Activated CD8-positive, alpha-beta T cell treated with anti-CD3 and anti-CD28 coated beads, Interleukin-2, amount 10 ng/mL, durations not matched to agents 7 days and 5 days (primary cell): ENCODE measurements at regions of chr22 and their contacts with region 1.

Region 1: DNA sequence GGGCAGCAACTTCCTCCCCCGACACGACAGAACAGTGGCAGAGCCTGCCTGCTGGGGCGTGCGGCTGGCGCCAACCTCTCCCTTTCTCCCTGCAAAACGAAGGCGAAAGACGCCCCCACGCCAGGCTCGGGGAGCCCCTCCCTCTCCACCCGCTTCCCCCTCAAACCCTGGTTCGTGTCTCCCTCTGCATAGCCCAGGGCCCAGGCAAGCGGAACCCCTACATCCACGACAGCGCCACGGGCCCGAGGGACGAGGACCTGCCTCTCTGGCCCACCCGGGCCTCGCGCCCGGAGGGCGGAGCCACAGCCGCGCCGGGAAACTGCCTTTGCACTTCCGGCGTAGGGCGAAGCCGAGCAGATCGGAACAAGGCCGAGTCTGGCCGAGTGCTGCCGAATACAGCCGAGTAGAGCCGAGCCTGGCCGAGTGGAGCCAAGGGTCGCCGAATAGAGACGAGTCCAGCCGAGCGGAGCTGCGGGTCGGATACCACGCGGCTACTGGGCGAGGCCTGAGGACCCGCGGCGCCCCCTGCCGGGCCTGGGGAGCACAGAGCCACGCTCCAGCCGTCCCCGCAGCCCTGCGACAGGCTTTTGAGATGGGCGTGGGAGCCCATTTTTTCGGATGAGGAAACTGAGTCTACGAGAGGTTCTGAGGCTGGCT is 11.2 kb upstream of the C1QTNF6 start:
- DNase-seq: peak; percentile 100
- ATAC-seq: peak; percentile 98
- H3K4me3 Mint-ChIP-seq: peak overlapping the region; percentile 87
- H3K27ac Mint-ChIP-seq: peak overlapping the region; percentile 96
- H3K4me1 Mint-ChIP-seq: peaks cover 71% of the 10 kb centered on the region
- H3K27me3 Mint-ChIP-seq: no peaks in the 10 kb centered on the region

Region 2: DNA sequence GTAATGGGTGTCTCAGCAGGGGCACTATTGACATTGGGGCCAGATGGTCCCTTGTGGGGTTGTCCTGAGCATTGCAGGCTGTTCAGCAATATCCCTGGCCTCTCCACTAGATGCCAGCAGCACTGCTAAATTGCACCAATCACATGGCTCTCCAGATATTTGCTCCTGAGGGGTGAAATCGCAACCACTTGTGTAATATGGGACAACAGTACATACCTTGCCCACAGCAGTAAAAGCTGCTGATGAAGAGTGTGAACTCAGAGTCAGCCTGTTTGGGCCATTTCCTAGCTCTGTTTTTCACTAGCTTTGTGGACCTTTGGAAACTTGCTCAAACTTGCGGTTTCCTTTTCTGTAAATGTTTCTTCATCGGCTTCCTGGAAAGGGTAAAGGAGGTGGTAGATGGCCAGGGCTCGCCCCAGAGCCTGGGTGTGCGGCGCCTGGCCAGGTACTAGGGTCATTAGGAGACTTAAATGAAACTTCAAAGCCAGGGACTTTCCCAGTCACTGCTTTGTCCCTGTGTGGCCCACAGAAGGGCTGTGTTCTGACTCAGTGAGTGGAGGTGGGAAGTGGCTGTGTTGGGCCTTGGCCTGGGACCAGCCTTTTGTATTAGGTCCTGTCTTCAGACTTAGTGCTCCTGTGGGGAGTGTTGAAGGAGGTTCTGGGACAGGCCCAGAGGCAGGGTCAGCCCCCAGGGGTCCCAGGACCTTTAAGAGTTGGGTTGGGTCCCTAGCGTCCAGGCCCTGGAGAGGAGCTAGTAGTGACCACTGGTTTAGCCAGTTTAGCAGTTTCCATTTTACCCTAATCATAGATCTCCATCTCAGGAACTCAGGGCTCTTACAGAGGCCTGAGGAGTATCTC is 325.3 kb before region 1 on chr22:
- CTCF ChIA-PET with region 1: no interaction called
- POLR2A ChIA-PET with region 1: no interaction called
- DNase-seq: peak; percentile 33
- ATAC-seq: peak; percentile 75
- H3K4me3 Mint-ChIP-seq: no peak overlapping the region
- H3K27ac Mint-ChIP-seq: peak overlapping the region; percentile 82
- H3K4me1 Mint-ChIP-seq: peaks cover 21% of the 10 kb centered on the region
- H3K27me3 Mint-ChIP-seq: no peaks in the 10 kb centered on the region

Region 3: DNA sequence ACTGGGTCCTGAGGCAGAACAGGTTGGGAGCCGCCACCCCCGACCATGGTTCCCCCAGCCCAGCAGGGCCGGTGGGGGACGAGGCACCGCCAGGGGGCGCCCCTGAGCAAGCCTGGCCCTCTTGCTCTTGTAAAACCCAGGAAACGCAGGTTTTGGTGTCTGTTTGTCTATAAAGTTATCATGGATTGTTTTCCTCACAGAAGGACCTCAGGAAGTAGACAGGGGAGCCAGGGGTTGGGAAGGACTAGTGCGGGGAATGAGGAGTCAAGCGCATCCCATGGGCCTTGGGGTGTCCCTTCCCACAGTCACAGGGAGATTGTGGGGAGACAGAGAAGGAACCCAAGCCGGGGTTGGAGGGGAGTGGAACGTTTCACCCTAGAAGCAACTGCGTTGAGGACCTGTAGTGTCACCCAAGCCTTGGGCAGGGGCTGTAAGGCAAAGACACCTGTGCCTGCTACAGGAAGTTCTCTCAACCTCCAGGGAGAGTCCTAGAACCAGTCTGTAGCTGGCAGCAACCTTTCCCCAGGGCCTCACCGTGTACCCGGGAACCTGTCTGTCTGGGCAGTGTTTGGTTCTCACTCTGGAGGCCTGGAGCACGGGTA is 121.2 kb before region 1 on chr22:
- CTCF ChIA-PET with region 1: interaction called, 30 read pairs
- POLR2A ChIA-PET with region 1: interaction called, 13 read pairs
- DNase-seq: peak; percentile 89
- ATAC-seq: peak; percentile 20
- H3K4me3 Mint-ChIP-seq: peak overlapping the region; percentile 72
- H3K27ac Mint-ChIP-seq: peak overlapping the region; percentile 99
- H3K4me1 Mint-ChIP-seq: peaks cover 69% of the 10 kb centered on the region
- H3K27me3 Mint-ChIP-seq: no peaks in the 10 kb centered on the region

Region 4: GRCh38 chr22:37148742-37149665 is 50.2 kb before region 1 on chr22:
- CTCF ChIA-PET with region 1: interaction called, 32 read pairs
- POLR2A ChIA-PET with region 1: interaction called, 31 read pairs
- DNase-seq: no peak
- ATAC-seq: peak; percentile 8
- H3K4me3 Mint-ChIP-seq: peak overlapping the region; percentile 84
- H3K27ac Mint-ChIP-seq: peak overlapping the region; percentile 99
- H3K4me1 Mint-ChIP-seq: peaks cover 56% of the 10 kb centered on the region
- H3K27me3 Mint-ChIP-seq: no peaks in the 10 kb centered on the region

Region 5: DNA sequence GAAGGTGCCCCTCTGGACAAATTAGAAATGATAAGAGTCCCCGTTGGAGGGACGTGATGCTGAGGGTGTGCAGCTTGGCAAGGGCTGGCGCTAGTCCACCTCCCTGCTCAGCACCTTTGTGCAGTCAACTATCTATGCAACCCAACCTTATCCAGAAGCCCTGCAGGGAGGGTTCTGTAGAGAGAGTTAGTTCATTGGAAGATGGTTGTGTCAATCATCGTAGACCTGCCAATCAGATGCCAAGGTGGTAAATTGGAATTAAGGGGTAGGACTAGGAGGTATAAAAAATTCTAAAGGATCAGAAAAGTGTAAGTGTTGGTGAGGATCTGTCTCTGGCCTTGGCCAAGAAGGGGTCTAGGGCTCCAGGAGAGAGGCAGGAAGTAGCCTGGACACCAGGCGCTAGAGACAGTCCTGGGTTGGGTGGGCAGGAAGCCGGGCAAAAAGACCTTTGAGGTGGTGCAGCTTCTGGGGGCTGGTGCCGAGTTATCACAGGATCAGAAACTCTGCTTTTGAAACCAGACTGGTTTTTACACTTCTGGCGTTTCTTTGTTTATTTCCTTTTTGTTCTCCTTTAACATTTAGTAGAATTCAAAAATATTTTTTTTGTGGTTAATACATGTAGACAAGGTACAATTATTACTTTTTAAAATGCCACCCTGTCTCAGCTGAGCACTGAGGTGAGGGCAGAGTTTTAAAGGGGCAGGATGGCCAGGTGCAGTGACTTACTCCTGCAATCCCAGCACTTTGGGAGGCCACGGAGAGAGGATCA is 12.8 kb before region 1 on chr22:
- CTCF ChIA-PET with region 1: interaction called, 25 read pairs
- POLR2A ChIA-PET with region 1: interaction called, 11 read pairs
- DNase-seq: peak; percentile 80
- ATAC-seq: peak; percentile 84
- H3K4me3 Mint-ChIP-seq: peak overlapping the region; percentile 39
- H3K27ac Mint-ChIP-seq: peak overlapping the region; percentile 86
- H3K4me1 Mint-ChIP-seq: peaks cover 80% of the 10 kb centered on the region
- H3K27me3 Mint-ChIP-seq: no peaks in the 10 kb centered on the region

Region 6: GRCh38 chr22:37218771-37219411 is 19.7 kb after region 1 on chr22:
- CTCF ChIA-PET with region 1: interaction called, 83 read pairs
- POLR2A ChIA-PET with region 1: interaction called, 12 read pairs
- DNase-seq: peak; percentile 86
- ATAC-seq: peak; percentile 76
- H3K4me3 Mint-ChIP-seq: peak overlapping the region; percentile 66
- H3K27ac Mint-ChIP-seq: peak overlapping the region; percentile 87
- H3K4me1 Mint-ChIP-seq: peaks cover 80% of the 10 kb centered on the region
- H3K27me3 Mint-ChIP-seq: no peaks in the 10 kb centered on the region

Region 7: DNA sequence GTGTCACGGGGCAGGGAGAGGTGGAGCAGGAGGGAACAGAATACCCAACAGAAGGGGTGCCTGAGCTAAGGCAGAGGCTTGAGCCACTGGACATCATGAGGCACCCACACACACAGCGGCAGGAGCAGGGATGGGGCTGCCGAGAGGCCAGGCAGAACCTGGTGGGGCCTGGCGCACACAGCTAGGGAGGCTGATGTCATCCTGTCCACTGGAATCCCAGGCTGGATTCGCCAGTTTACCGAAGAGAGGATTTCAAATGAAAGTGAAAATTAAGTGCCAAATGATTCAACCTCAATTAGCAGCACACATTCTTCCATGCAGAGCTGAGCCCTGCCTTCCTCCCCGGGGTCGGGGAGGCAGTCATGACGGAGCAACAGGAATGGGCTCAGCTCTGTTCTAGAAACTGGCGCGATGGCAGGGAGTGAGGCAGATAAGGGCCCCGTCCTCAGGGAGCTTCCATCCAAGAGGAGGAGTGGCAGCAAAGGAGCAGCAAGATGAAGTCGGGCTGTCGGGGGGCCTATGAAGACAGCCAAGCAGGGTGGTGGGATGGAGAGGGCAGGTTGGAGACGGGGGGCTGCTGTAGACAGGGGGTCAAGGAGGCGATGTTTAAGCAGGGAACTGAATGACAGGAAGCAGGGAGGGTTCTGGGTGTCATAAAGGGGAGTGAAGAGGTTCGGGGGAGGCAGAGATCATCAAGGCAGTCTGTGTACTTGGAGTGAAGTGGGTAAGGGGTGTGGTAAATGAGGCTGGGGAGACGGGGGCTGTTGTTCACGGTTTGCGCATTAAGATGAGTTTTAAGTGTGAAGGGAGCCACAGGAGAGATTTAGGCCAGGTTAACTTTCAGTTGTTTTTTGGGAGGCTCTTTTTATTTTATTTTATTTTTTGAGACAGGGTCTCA is 38.4 kb after region 1 on chr22:
- CTCF ChIA-PET with region 1: interaction called, 20 read pairs
- POLR2A ChIA-PET with region 1: interaction called, 23 read pairs
- DNase-seq: no peak
- ATAC-seq: no peak
- H3K4me3 Mint-ChIP-seq: peak overlapping the region; percentile 99
- H3K27ac Mint-ChIP-seq: peak overlapping the region; percentile 99
- H3K4me1 Mint-ChIP-seq: peaks cover 88% of the 10 kb centered on the region
- H3K27me3 Mint-ChIP-seq: no peaks in the 10 kb centered on the region

Region 8: GRCh38 chr22:37260901-37261336 is 61.7 kb after region 1 on chr22:
- CTCF ChIA-PET with region 1: interaction called, 14 read pairs
- POLR2A ChIA-PET with region 1: no interaction called
- DNase-seq: peak; percentile 75
- ATAC-seq: peak; percentile 73
- H3K4me3 Mint-ChIP-seq: no peak overlapping the region
- H3K27ac Mint-ChIP-seq: peak overlapping the region; percentile 50
- H3K4me1 Mint-ChIP-seq: peaks cover 26% of the 10 kb centered on the region
- H3K27me3 Mint-ChIP-seq: peaks cover 4% of the 10 kb centered on the region

Region 9: GRCh38 chr22:37370306-37370979 is 171.2 kb after region 1 on chr22:
- CTCF ChIA-PET with region 1: no interaction called
- POLR2A ChIA-PET with region 1: no interaction called
- DNase-seq: no peak
- ATAC-seq: no peak
- H3K4me3 Mint-ChIP-seq: no peak overlapping the region
- H3K27ac Mint-ChIP-seq: no peak overlapping the region
- H3K4me1 Mint-ChIP-seq: no peaks in the 10 kb centered on the region
- H3K27me3 Mint-ChIP-seq: no peaks in the 10 kb centered on the region